MCF 10A (cell line): ENCODE measurements at regions of chr11 and their contacts with region 1.

Region 1: DNA sequence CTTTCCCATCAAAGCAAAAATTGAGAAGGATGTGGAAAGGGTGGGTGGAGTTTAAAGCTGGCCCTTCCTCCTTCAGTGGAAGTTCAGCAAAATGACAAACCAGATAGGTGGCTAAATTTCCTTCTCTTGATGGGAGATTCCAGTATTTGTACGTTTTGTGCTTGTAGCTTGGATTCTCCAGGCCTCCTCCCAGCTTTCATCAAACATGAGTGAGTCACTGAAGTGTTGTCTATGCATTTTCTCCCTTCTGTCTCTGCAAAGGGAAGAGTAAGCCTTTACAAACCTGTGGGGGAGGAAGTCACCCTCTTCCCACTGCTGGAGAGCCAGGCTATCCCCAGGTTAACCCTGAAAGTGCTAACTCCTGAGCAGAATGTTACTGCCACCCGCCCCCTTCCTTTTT is 6.4 kb downstream of the MARK2 start:
- DNase-seq: peak; percentile 69
- H3K4me3 Mint-ChIP-seq: peak overlapping the region; percentile 23
- H3K27ac Mint-ChIP-seq: peak overlapping the region; percentile 70
- H3K4me1 Mint-ChIP-seq: peaks cover 36% of the 10 kb centered on the region
- H3K27me3 Mint-ChIP-seq: no peaks in the 10 kb centered on the region
- CTCF ChIP-seq: no peak

Region 2: GRCh38 chr11:63871962-63872799 is 26.9 kb after region 1 on chr11:
- CTCF ChIA-PET with region 1: interaction called, 94 read pairs
- POLR2A ChIA-PET with region 1: interaction called, 31 read pairs
- intact Hi-C with region 1: loop called (anchors 1 kb)
- DNase-seq: peak; percentile 97
- H3K4me3 Mint-ChIP-seq: peak overlapping the region; percentile 33
- H3K27ac Mint-ChIP-seq: no peak overlapping the region
- H3K4me1 Mint-ChIP-seq: peaks cover 32% of the 10 kb centered on the region
- H3K27me3 Mint-ChIP-seq: no peaks in the 10 kb centered on the region
- CTCF ChIP-seq: peak; percentile 16

Region 3: DNA sequence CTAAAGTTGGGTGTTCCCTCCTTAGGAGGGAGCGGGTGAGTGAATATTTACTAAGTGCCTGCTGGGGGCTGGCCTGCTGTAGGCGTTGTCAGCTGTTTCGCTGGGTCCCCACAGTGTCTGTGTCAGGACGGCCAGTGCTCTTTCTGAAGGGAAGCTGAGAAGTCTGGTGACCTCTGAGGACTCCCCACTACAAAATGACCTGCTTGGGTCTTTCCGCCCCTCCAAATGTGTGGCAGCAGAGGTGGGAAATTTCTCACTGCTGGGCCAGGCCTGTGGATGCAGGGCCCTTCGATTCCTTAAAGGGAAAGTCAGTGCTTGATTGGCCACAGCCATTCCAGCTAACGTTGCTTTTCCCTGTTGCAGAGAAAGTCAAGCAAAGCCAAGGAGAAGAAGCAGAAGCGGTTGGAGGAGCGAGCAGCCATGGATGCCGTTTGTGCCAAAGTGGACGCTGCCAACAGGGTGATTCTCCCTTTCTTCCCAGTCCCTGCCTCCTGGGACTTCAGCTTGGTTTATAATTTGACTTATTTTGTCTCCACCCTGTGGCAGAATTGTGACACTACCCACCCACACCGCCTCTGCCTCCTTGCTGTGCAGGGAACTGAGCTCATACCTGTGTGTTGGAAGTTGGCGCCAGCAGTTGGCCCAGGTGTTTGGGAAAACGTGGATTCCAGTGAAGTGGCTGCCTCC is 100.3 kb after region 1 on chr11:
- CTCF ChIA-PET with region 1: interaction called, 241 read pairs
- POLR2A ChIA-PET with region 1: interaction called, 37 read pairs
- intact Hi-C with region 1: no loop called
- DNase-seq: peak; percentile 75
- H3K4me3 Mint-ChIP-seq: no peak overlapping the region
- H3K27ac Mint-ChIP-seq: no peak overlapping the region
- H3K4me1 Mint-ChIP-seq: no peaks in the 10 kb centered on the region
- H3K27me3 Mint-ChIP-seq: no peaks in the 10 kb centered on the region
- CTCF ChIP-seq: peak; percentile 63